Right ventricle myocardium inferior (tissue), 1 donor: ENCODE measurements at regions of chr5 and their contacts with region 1.

Region 1: GRCh38 chr5:147658293-147658932 is 124.1 kb downstream of the JAKMIP2 start:
- DNase-seq: no peak
- ATAC-seq: no peak

Region 2: DNA sequence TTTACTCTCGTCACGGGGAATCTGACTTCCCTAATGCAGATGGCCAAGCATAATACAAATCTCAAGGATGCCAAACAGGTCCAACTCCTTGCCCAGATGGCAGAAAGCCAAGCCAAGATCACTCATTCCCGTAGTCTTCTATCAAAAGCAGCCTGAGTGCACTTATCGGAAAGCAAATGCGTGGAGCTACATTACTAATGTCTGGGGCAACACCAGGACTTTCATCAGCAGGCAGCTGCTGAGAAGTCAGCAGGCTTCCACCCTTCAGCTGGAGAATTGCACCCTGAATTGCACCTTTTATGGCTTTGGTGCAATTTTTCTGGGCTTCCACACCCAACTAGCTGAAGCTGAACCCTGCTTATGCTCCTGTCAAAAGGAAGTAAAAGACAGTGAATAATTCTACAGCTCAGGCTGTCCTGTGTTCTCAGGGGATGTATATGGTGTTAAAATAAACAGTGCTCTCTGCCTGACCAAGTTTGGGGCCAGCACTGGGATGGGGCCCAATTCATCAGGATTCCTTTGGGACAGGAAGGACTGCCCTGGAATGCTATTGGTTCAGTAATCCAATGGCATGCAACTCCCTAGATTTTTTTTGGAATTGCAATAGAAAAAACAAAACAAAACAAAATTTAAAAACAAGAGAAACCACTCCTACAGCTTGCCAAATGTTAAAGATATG is 241.1 kb before region 1 on chr5:
- intact Hi-C with region 1: no loop called
- DNase-seq: no peak
- ATAC-seq: peak; percentile 80

Region 3: DNA sequence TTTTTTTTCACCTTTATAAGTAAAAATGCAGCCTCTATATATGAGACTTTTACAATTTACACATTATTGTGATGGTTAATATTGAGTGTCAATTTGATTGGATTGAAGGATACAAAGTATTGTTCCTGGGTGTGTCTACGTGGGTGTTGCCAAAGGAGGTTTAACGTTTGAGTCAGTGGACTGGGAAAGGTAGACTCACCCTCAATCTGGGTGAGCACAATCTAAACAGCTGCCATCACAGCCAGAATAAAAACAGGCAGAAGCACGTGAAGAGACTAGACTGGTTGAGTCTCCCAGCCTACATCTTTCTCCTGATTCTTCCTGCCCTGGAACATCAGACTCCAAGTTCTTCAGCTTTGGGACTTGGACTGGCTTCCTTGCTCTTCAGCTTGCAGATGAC is 15.7 kb before region 1 on chr5:
- intact Hi-C with region 1: loop called (anchors 1 kb)
- DNase-seq: no peak
- ATAC-seq: no peak

Region 4: GRCh38 chr5:148491015-148491792 is 832.8 kb after region 1 on chr5:
- intact Hi-C with region 1: no loop called
- DNase-seq: no peak
- ATAC-seq: peak; percentile 94